Posterior vena cava (tissue), 2 donors: ENCODE measurements at regions of chr6 and their contacts with region 1.

Region 1: GRCh38 chr6:44489910-44490604 is 102.6 kb downstream of the CDC5L start:
- DNase-seq: no peak

Region 2: GRCh38 chr6:44446628-44447306 is 43.3 kb before region 1 on chr6:
- intact Hi-C with region 1: no loop called
- DNase-seq: no peak

Region 3: DNA sequence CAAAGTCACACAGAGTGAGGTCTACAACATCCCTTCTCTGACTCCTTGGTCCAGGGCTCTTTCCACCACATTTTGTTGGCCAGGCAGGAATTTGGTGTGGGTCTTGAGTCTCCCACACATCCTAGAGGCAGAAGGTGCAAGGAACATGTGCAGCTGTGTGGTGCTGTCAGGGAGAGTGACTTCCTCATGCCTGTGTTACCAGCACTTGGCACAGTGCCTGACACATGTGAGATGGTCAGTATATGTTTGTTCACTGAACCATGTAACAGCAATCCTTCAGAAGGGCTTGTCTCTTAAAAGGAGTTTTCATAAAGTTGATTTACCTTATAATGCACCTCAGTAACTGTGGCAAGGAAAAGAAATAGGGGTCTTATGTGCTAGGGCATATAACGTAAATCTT is 66.0 kb after region 1 on chr6:
- intact Hi-C with region 1: loop called in 1 of 2 experiments (anchors 10 kb)
- DNase-seq: no peak